Endothelial cell of umbilical vein (primary cell): ENCODE measurements at regions of chr6 and their contacts with region 1.

Region 1: DNA sequence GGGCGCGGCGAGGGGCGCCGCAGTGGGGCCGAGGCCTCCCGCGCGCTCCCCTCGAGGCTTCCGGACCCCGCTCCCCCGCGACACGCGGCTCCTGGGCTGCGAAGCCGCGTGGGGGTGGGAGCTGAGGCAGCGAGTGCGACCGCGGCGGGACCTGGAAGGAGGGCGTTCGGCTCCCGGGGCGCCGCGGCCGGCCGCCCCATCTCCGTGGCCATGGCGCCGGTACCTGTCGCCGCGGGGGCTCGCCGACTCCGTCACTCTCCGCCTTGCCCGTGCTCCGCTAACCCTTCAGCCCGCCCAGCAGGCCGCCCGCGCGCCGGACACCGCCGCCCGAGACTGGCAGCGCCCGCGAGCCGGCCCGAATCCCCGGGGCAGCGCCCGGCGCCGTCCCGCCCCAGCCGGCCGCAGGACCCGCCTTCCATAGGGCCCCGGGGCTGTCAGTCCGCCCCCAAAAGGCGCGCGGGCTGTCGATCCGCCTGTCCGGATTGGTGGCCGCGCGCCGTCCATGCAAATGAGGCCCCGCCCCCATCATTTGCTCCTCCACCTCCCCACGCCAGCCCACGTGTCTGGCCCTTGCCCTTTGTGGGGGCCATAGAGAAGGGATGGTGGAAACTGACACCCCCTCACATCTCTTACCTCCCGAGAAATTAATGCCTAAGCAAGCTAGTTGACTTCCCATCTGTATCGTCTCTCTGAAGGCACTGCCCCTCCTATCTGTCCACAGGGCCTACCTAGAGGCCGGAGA is at the start of gene FKBP5:
- DNase-seq: peak; percentile 89
- H3K4me3 ChIP-seq: peak within 1 kb of the TSS; percentile 55 to 91 (median 56)
- H3K27ac ChIP-seq: peak within 1 kb of the TSS; percentile 79
- H3K4me1 ChIP-seq: peaks cover 10% of the 10 kb centered on the region
- H3K27me3 ChIP-seq: no peaks in the 10 kb centered on the region
- CTCF ChIP-seq: no peak
- POLR2A ChIP-seq: peak; percentile 92
- total RNA-seq, gene FKBP5: 56.8 and 70.6 TPM in 2 replicates

Region 2: DNA sequence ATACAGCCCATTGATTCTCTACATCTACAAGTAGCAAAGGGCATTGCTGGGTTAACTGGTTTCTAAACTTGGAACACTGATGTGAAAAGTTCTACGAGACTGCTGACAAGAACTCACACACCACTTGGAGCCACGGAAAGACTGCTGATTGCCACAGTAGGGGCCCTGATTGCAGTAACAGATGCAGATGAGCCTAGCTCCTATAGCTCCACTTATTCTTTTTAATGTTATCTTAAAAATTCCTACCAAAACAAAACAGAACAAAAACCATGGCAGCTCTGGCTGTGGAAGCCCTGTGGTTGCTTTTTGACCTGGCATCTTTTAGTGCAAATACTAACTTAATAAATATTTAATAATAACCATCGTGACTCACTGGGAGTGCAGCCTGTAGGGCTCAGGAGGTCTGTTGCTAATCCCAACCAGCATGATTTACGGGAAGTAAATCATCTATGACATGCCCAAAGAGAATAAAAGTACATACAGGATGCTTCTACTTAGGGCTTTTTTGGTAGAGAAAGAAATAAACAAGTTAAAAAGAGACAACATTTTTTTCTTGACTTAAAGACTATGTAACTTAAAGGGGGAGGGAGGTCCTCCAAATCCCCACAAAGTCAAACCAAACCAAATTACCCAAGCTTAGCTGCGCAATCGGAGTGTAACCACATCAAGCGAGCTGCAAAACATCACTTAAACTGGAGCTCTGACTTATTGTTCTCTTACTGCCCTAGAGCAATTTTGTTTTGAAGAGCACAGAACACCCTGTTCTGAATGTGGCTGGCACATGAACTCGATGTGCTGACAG is 87.2 kb before region 1 on chr6:
- CTCF ChIA-PET with region 1: no interaction called
- POLR2A ChIA-PET with region 1: no interaction called
- dilution Hi-C with region 1: no loop called
- intact Hi-C with region 1: loop called (anchors 1 kb)
- DNase-seq: peak; percentile 88
- H3K4me3 ChIP-seq: peak overlapping the region in 1 of 3 experiments; percentile 21
- H3K27ac ChIP-seq: peak overlapping the region; percentile 96
- H3K4me1 ChIP-seq: peaks cover 72% of the 10 kb centered on the region
- H3K27me3 ChIP-seq: no peaks in the 10 kb centered on the region
- CTCF ChIP-seq: no peak
- POLR2A ChIP-seq: no peak

Region 3: GRCh38 chr6:35669451-35670045 is 19.2 kb before region 1 on chr6:
- CTCF ChIA-PET with region 1: interaction called, 20 read pairs
- POLR2A ChIA-PET with region 1: no interaction called
- dilution Hi-C with region 1: no loop called
- intact Hi-C with region 1: loop called (anchors 2 kb)
- DNase-seq: peak; percentile 94
- H3K4me3 ChIP-seq: peak overlapping the region in 2 of 3 experiments; percentile 2 to 59
- H3K27ac ChIP-seq: peak overlapping the region; percentile 95
- H3K4me1 ChIP-seq: peaks cover 51% of the 10 kb centered on the region
- H3K27me3 ChIP-seq: no peaks in the 10 kb centered on the region
- CTCF ChIP-seq: no peak
- POLR2A ChIP-seq: no peak

Region 4: GRCh38 chr6:35703554-35703953 is 14.8 kb after region 1 on chr6:
- CTCF ChIA-PET with region 1: no interaction called
- POLR2A ChIA-PET with region 1: no interaction called
- dilution Hi-C with region 1: no loop called
- intact Hi-C with region 1: no loop called
- DNase-seq: no peak
- H3K4me3 ChIP-seq: no peak overlapping the region
- H3K27ac ChIP-seq: no peak overlapping the region
- H3K4me1 ChIP-seq: peaks cover 3% of the 10 kb centered on the region
- H3K27me3 ChIP-seq: no peaks in the 10 kb centered on the region
- CTCF ChIP-seq: no peak
- POLR2A ChIP-seq: no peak

Region 5: GRCh38 chr6:35719830-35720733 is 31.3 kb after region 1 on chr6:
- CTCF ChIA-PET with region 1: interaction called, 5 read pairs
- POLR2A ChIA-PET with region 1: no interaction called
- dilution Hi-C with region 1: no loop called
- intact Hi-C with region 1: loop called (anchors 1 kb)
- DNase-seq: peak; percentile 62
- H3K4me3 ChIP-seq: peak overlapping the region in 1 of 3 experiments; percentile 27
- H3K27ac ChIP-seq: peak overlapping the region; percentile 57
- H3K4me1 ChIP-seq: peaks cover 31% of the 10 kb centered on the region
- H3K27me3 ChIP-seq: no peaks in the 10 kb centered on the region
- CTCF ChIP-seq: no peak
- POLR2A ChIP-seq: peak; percentile 43

Region 6: DNA sequence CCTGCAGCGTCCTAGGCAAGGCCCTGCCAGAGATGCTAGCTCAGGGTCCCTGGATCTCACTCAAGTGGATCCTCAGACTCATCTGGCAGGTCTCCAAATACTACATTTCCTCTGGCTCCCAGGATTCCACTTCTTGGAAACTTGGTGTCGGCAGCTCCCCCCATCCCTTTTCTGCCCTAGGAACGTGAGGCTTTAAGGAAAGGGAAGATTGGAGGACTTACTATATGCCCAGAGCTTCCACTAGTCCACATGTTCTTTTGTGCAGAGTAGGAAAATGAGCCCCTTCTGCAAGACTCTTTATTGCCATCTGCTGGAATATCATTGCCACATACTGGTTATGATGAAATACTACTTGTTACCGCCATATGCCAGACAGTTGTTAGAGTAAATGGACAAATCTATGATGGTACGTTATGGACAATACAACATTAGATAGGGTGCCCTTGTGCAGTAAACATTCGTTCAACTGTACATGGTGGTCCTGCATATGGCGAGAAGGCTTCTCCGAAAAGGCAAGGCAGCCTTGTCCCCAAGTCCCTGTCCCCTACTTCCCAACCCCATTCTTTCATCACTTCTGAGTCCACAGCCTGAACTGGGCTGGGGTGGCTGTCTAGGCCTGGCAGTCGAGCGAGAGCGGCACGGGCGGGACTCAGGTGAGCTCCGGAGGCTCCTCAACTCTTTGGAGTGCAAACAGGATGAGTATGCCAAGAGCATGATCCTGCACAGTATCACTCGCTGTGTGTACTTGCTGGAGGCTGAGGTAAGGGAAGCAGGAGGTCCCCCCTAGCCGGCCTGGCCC is 48.9 kb after region 1 on chr6:
- CTCF ChIA-PET with region 1: interaction called, 100 read pairs
- POLR2A ChIA-PET with region 1: interaction called, 3 read pairs
- dilution Hi-C with region 1: no loop called
- intact Hi-C with region 1: loop called (anchors 1 kb)
- DNase-seq: peak; percentile 77
- H3K4me3 ChIP-seq: no peak overlapping the region
- H3K27ac ChIP-seq: no peak overlapping the region
- H3K4me1 ChIP-seq: peaks cover 8% of the 10 kb centered on the region
- H3K27me3 ChIP-seq: no peaks in the 10 kb centered on the region
- CTCF ChIP-seq: peak; percentile 60 to 67
- POLR2A ChIP-seq: no peak